ENCODE measurements at regions of chrX and their contacts with region 1.

Region 1: DNA sequence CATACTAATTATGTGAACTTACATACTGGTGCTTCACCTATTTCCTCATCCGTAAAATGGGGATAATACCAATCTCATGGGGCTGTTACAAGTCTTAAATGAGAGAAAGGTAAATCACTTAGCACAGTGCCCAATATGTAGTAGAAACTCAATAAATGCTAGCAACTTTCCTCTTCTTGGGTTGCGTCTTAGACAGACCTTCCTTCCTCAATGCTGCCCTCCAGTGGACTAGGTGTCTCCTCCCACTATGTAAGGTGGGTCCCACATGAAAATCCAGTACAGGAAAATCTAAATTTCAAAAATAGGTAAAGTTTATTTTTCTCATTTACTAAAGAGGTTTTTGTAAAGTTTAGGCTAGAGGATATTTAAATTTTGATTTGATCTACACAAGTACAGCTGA is 20.6 kb downstream of the ZDHHC9 start:
- DNase-seq: peak in 8 of 9 donors; percentile 23 to 68 (median 52)
- ATAC-seq: peak; percentile 81
- H3K4me3 ChIP-seq: no peak overlapping the region
- H3K4me3 Mint-ChIP-seq: no peak overlapping the region
- H3K27ac ChIP-seq: no peak overlapping the region
- H3K27ac Mint-ChIP-seq: peak overlapping the region in 1 of 9 donors; percentile 83
- H3K4me1 ChIP-seq: peaks cover 0 to 6% of the 10 kb centered on the region in 2 donors
- H3K4me1 Mint-ChIP-seq: peaks cover 0 to 21% (median 14%) of the 10 kb centered on the region in 7 donors
- H3K27me3 ChIP-seq: no peaks in the 10 kb centered on the region
- H3K27me3 Mint-ChIP-seq: no peaks in the 10 kb centered on the region

Region 2: GRCh38 chrX:129654419-129655165 is 168.5 kb before region 1 on chrX and contains the start of gene APLN:
- CTCF ChIA-PET with region 1: interaction called, 11 read pairs
- POLR2A ChIA-PET with region 1: interaction called, 3 read pairs
- intact Hi-C with region 1: loop called (anchors 1 kb)
- DNase-seq: peak in 2 of 9 donors; percentile 18 to 28
- ATAC-seq: peak; percentile 64
- H3K4me3 ChIP-seq: peak within 1 kb of the TSS; percentile 9
- H3K4me3 Mint-ChIP-seq: peak within 1 kb of the TSS; percentile 54 to 85 (median 68)
- H3K27ac ChIP-seq: no peak within 1 kb of the TSS
- H3K27ac Mint-ChIP-seq: peak within 1 kb of the TSS in 1 of 9 donors; percentile 9
- H3K4me1 ChIP-seq: peaks cover 3 to 7% of the 10 kb centered on the region in 2 donors
- H3K4me1 Mint-ChIP-seq: peaks cover 6 to 12% (median 9%) of the 10 kb centered on the region in 7 donors
- H3K27me3 ChIP-seq: no peaks in the 10 kb centered on the region
- H3K27me3 Mint-ChIP-seq: peaks cover 4 to 25% (median 5%) of the 10 kb centered on the region in 5 donors
- total RNA-seq, gene APLN: 0.10 TPM in 1 of 5 experiments, not detected in the others

Region 3: DNA sequence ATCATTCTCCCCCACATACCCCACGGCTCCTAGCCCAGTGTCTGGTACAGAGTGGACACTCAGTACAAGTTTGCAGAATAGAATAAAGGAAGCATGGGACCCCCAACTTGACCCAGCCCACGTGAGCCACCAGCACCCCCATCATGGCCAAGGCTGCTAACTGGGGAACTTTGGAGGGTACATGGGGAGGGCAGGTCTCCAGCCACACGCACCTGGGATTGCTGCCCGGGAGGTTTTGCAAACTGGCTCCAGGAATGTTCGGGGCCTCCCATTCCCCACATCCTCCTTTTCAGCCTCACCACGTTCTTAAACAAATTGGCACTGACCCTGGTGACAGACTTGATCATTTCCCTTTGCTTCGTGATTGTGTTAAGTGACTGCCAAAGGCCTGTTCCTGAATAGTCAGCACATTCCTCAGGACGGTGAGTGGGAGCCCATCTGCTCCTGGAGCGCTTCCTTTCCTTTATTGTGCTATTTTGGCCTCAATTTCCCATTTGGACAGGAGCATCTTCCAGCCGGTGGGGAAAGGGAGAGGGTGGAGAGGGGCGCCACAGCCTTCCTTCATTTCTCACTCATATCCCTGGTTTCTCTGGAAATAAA is 103.1 kb before region 1 on chrX:
- CTCF ChIA-PET with region 1: no interaction called
- POLR2A ChIA-PET with region 1: no interaction called
- intact Hi-C with region 1: loop called in 1 of 2 experiments (anchors 2 kb)
- DNase-seq: no peak
- ATAC-seq: no peak
- H3K4me3 ChIP-seq: no peak overlapping the region
- H3K4me3 Mint-ChIP-seq: no peak overlapping the region
- H3K27ac ChIP-seq: no peak overlapping the region
- H3K27ac Mint-ChIP-seq: no peak overlapping the region
- H3K4me1 ChIP-seq: peaks cover 5 to 9% of the 10 kb centered on the region in 2 donors
- H3K4me1 Mint-ChIP-seq: peaks cover 8 to 27% (median 21%) of the 10 kb centered on the region in 7 donors
- H3K27me3 ChIP-seq: no peaks in the 10 kb centered on the region
- H3K27me3 Mint-ChIP-seq: no peaks in the 10 kb centered on the region

Region 4: DNA sequence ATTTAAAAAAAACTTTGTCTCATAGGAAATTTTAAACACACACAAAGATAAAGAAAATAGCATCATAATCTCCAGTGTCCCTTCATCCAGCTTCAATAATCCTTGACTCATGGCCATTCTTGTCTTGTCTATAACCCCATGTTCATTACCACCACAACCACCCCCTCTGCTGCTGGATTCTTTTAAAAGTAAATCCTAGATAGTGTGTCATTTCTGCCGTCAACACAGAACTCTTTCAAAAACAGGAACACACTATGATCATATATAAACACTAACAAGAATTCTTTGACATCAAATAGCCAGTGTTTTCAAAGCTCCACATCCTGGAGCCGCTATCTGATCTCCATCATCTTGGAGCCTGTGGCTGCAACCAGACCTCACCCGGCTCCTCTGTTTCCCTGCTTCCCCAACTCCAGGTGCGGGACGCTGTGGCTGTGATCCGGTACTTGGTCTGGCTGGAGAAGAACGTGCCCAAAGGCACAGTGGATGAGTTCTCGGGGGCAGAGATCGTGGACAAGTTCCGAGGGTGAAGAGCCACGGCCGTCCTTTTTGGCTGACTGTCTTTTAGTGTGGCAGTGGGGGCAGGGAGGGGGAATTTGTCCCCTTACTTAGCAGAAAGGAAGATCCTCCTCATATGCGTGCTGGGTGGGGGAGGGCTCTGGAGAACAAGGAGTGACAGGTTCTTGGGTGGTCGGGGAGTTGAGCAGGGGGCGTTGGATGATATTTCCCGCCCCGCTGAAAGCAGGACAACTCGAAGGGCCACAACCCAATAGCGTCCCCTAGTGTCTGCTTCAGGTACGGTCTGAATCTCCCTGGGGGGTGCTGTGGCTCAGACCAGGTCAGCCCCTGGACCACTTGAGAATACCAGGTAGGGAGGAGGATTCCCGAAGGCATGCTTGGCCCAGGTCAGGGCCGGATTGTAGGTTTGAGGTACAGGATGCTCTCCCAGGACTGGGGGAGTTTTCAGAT is 68.8 kb before region 1 on chrX:
- CTCF ChIA-PET with region 1: interaction called, 11 read pairs
- POLR2A ChIA-PET with region 1: interaction called, 3 read pairs
- intact Hi-C with region 1: loop called (anchors 1 to 2 kb)
- DNase-seq: no peak
- ATAC-seq: peak; percentile 44
- H3K4me3 ChIP-seq: no peak overlapping the region
- H3K4me3 Mint-ChIP-seq: peak overlapping the region in 9 of 10 donors; percentile 10 to 74 (median 47)
- H3K27ac ChIP-seq: no peak overlapping the region
- H3K27ac Mint-ChIP-seq: peak overlapping the region in 7 of 9 donors; percentile 45 to 71 (median 64)
- H3K4me1 ChIP-seq: peaks cover 37 to 44% of the 10 kb centered on the region in 2 donors
- H3K4me1 Mint-ChIP-seq: peaks cover 26 to 56% (median 53%) of the 10 kb centered on the region in 7 donors
- H3K27me3 ChIP-seq: no peaks in the 10 kb centered on the region
- H3K27me3 Mint-ChIP-seq: no peaks in the 10 kb centered on the region

Region 5: DNA sequence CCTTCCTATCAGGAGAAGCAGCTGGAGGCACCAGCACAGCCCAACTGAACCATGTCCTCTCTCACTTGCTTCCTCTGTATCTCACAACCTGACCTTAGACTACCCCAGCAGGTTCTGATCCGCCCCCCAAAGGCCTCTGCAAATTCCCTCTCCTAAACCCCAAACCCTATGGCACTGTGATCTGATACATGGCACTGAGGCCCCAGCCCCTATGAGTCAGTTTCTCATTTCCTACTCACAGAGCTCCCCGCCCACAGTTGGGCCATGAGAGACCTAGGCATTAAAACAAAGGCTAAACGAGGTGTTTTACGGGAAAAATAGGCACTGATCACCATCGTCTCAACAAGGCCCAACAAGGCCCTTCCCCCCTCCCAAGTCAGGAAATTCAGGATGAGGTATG is 24.2 kb before region 1 on chrX:
- CTCF ChIA-PET with region 1: no interaction called
- POLR2A ChIA-PET with region 1: interaction called, 3 read pairs
- intact Hi-C with region 1: loop called in 1 of 2 experiments (anchors 2 kb)
- DNase-seq: no peak
- ATAC-seq: peak; percentile 61
- H3K4me3 ChIP-seq: no peak overlapping the region
- H3K4me3 Mint-ChIP-seq: no peak overlapping the region
- H3K27ac ChIP-seq: no peak overlapping the region
- H3K27ac Mint-ChIP-seq: peak overlapping the region in 7 of 9 donors; percentile 37 to 69 (median 53)
- H3K4me1 ChIP-seq: no peaks in the 10 kb centered on the region
- H3K4me1 Mint-ChIP-seq: peaks cover 6 to 27% (median 19%) of the 10 kb centered on the region in 7 donors
- H3K27me3 ChIP-seq: no peaks in the 10 kb centered on the region
- H3K27me3 Mint-ChIP-seq: no peaks in the 10 kb centered on the region

Region 6: GRCh38 chrX:129872524-129872923 is 49.4 kb after region 1 on chrX:
- CTCF ChIA-PET with region 1: no interaction called
- POLR2A ChIA-PET with region 1: no interaction called
- intact Hi-C with region 1: no loop called
- DNase-seq: no peak
- ATAC-seq: no peak
- H3K4me3 ChIP-seq: no peak overlapping the region
- H3K4me3 Mint-ChIP-seq: no peak overlapping the region
- H3K27ac ChIP-seq: no peak overlapping the region
- H3K27ac Mint-ChIP-seq: no peak overlapping the region
- H3K4me1 ChIP-seq: no peaks in the 10 kb centered on the region
- H3K4me1 Mint-ChIP-seq: no peaks in the 10 kb centered on the region
- H3K27me3 ChIP-seq: no peaks in the 10 kb centered on the region
- H3K27me3 Mint-ChIP-seq: peaks cover 0 to 7% (median 0%) of the 10 kb centered on the region in 5 donors

Region 7: GRCh38 chrX:130704053-130705038 is 881.2 kb after region 1 on chrX:
- CTCF ChIA-PET with region 1: no interaction called
- POLR2A ChIA-PET with region 1: no interaction called
- intact Hi-C with region 1: no loop called
- DNase-seq: no peak
- ATAC-seq: no peak
- H3K4me3 ChIP-seq: no peak overlapping the region
- H3K4me3 Mint-ChIP-seq: no peak overlapping the region
- H3K27ac ChIP-seq: no peak overlapping the region
- H3K27ac Mint-ChIP-seq: no peak overlapping the region
- H3K4me1 ChIP-seq: no peaks in the 10 kb centered on the region
- H3K4me1 Mint-ChIP-seq: peaks cover 0 to 2% (median 0%) of the 10 kb centered on the region in 7 donors
- H3K27me3 ChIP-seq: no peaks in the 10 kb centered on the region
- H3K27me3 Mint-ChIP-seq: no peaks in the 10 kb centered on the region

Measured in naive thymus-derived CD4-positive, alpha-beta T cell (primary cell).